PC-9 (cell line): ENCODE measurements at regions of chr2 and their contacts with region 1.

Region 1: DNA sequence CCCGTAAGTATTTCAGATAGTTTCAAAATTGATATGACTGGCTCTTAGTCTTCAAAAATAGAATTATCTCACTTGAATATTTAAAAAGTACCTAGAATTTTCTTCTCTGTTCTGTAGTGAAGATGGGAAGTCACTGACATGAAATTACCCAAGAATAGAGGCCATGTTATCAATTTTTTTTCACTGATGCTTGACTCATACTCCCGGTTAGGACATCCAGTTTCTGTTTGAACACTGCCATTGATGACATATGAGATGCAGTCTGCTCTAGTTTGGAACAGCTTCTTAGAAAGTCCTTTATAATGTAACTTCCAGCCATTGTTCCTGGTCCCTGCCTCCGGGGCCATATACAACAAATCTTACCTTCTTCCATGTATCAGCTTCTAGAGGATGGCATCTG is 26.0 kb downstream of the MAP3K20 start:
- DNase-seq: peak in 1 of 2 experiments; percentile 62
- H3K4me3 ChIP-seq: no peak overlapping the region
- H3K27ac ChIP-seq: no peak overlapping the region
- H3K4me1 ChIP-seq: peaks cover 15% of the 10 kb centered on the region
- H3K27me3 ChIP-seq: no peaks in the 10 kb centered on the region
- CTCF ChIP-seq: no peak

Region 2: DNA sequence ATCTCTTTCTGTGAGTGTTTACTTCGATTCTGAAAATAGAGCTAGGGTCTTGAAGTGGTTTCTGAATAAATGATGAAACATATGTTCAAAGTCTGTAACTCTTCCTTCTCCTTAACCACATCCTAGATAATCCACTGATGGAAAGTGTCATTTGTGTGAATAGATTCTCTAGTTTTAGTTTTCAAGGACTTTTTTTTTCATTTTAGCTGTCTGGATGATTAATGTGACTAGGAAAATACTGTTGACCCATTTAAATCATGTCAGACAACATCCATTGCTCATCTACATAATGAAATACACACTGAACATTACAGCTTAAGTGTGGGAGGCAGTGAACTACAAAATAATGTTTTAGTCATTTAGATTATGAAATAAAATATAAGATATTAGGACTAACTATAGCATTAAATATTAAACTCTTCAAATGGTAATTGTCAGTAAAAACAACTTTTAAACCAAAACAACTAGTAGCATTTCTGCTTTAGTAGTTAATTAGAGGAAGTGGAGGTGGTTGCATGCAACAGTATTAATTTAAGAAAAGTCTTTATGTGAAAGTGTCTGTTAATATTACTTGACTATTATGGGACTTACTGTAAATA is 1055.5 kb before region 1 on chr2:
- CTCF ChIA-PET with region 1: no interaction called
- POLR2A ChIA-PET with region 1: interaction called, 25 read pairs
- intact Hi-C with region 1: no loop called
- DNase-seq: no peak
- H3K4me3 ChIP-seq: no peak overlapping the region
- H3K27ac ChIP-seq: peak overlapping the region; percentile 7
- H3K4me1 ChIP-seq: peaks cover 12% of the 10 kb centered on the region; the same call in 1 of the 2 replicates
- H3K27me3 ChIP-seq: no peaks in the 10 kb centered on the region
- CTCF ChIP-seq: no peak

Region 3: GRCh38 chr2:173511942-173512341 is 410.3 kb after region 1 on chr2:
- CTCF ChIA-PET with region 1: no interaction called
- POLR2A ChIA-PET with region 1: interaction called, 10 read pairs
- intact Hi-C with region 1: no loop called
- DNase-seq: peak; percentile 6 to 68
- H3K4me3 ChIP-seq: peak overlapping the region; percentile 5; the same call in 1 of the 2 replicates
- H3K27ac ChIP-seq: peak overlapping the region; percentile 70
- H3K4me1 ChIP-seq: peaks cover 16% of the 10 kb centered on the region
- H3K27me3 ChIP-seq: peaks cover 15% of the 10 kb centered on the region; the same call in 1 of the 2 replicates
- CTCF ChIP-seq: no peak